HepG2 (cell line): ENCODE measurements at regions of chr17 and their contacts with region 1.

Region 1: GRCh38 chr17:18038861-18039534 is at the starts of genes ATPAF2 and GID4:
- DNase-seq: peak; percentile 96
- ATAC-seq: peak; percentile 90
- H3K4me3 ChIP-seq: peak within 1 kb of the TSS; percentile 73 to 89 (median 89)
- H3K27ac ChIP-seq: peak within 1 kb of the TSS; percentile 58
- H3K4me1 ChIP-seq: peaks cover 60% of the 10 kb centered on the region
- H3K27me3 ChIP-seq: no peaks in the 10 kb centered on the region; a peak in 1 of 5 replicates
- CTCF ChIP-seq: peak; percentile 40
- EP300 ChIP-seq: 0 out of 4 replicates have a peak, but pooled peaks of 1 of the 2 experiments have one; percentile 32
- POLR2A ChIP-seq: peak; percentile 71 to 83
- RAD21 ChIP-seq: peak; percentile 55
- total RNA-seq, gene ATPAF2: 14.2 and 15.0 TPM in 2 replicates
- total RNA-seq, gene GID4: 4.3 and 5.5 TPM in 2 replicates

Region 2: DNA sequence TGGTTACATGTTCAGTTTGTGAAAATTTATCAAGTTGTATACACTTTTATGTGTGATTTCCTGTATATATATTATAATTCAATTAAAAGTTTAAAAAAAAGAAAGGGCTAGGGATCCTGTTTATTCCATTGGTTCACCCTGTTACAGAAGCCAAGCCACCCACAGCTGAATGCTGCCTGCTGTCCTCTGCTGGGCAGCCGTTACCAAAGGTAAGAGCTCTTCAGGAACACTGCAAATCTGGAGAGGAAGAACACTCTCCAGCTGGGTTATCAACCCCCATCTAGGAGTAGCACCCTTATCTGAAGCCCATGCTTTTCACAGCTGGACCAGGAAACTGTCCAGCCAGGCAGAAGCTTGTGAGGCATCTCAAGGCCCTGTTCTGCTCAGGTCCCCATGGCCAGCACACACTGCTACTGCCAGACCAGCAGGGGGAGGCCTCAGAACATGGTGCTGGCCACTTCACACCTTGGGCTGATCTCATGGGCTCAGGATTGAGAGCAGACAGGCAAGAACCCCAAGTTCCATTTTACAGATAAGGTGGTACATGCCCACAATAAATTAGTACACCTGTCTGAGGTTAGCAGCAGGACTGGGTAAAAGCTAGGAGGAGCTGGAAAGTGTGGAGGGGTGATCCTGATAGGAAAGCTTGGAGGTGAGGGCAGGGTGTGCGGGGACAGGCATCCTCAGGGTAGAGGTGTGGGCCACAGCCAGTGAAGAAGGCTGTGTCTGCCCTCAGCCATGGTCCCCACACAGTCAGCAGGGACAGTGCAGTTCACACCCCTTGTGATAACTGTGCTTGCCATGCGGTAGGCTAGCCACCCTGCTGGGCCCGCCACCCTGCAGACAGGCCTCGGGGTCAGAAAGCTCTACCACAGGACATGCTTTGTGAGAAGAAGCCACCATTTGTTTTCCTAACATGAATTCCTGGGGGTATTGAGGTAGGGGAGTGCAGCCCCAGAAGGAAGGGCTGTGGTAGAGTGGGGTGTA is 147.9 kb before region 1 on chr17:
- CTCF ChIA-PET with region 1: interaction called, 13 read pairs
- POLR2A ChIA-PET with region 1: no interaction called
- in situ Hi-C with region 1: loop called (anchors 10 kb)
- intact Hi-C with region 1: loop called (anchors 5 kb)
- DNase-seq: peak; percentile 70
- ATAC-seq: peak; percentile 98
- H3K4me3 ChIP-seq: no peak overlapping the region
- H3K27ac ChIP-seq: no peak overlapping the region
- H3K4me1 ChIP-seq: peaks cover 2% of the 10 kb centered on the region
- H3K27me3 ChIP-seq: no peaks in the 10 kb centered on the region
- CTCF ChIP-seq: peak; percentile 97
- EP300 ChIP-seq: no peak
- POLR2A ChIP-seq: no peak
- RAD21 ChIP-seq: peak; percentile 94